Panc1 (cell line): ENCODE measurements at regions of chr4 and their contacts with region 1.

Region 1: GRCh38 chr4:114386637-114387233 is 211.9 kb upstream of the UGT8 start:
- DNase-seq: no peak
- ATAC-seq: no peak
- H3K4me3 ChIP-seq: no peak overlapping the region
- H3K27ac ChIP-seq: no peak overlapping the region
- H3K4me1 ChIP-seq: no peaks in the 10 kb centered on the region
- H3K27me3 ChIP-seq: no peaks in the 10 kb centered on the region
- CTCF ChIP-seq: peak; percentile 60; the same call in 1 of the 2 replicates

Region 2: DNA sequence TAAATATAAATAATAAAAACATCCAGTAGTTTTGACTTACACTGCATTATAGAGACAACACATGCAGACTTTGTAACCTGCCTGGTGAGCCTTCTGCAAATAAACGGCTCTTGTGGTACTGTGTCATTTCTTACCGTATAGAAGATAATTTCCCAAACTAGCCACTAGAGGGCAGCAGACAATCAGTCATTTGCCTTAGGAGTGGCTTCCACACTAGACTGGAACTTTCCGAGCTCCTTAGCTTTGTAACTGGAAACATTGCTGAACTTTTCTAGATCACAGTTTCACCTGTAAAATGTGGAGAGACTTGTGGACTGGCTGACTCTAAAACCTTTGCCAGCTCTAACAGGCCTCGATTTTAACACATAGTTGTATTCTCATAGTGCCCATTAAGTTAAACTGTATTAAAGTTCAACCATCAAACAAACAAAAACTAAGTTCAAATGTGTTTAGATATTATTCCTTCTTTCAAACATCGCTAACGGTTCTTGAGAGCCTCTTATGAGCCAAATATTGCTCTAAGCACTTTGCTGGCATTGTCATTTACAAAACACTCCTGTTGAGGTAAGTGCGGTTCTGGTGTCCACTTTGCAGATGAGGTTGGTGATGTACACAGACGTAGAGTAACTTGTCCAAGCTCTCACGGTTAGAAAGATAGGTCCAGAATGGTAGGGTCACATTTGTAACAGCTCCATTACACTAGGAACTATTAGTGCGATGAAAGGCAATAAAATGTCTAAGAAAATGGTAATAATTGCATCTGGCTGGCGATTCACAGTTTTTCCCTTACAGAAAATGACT is 991.8 kb before region 1 on chr4:
- CTCF ChIA-PET with region 1: interaction called, 3 read pairs
- POLR2A ChIA-PET with region 1: no interaction called
- in situ Hi-C with region 1: no loop called
- intact Hi-C with region 1: loop called (anchors 2 kb)
- DNase-seq: peak; percentile 77
- ATAC-seq: peak; percentile 100
- H3K4me3 ChIP-seq: no peak overlapping the region
- H3K27ac ChIP-seq: peak overlapping the region; percentile 61; the same call in 1 of the 2 replicates
- H3K4me1 ChIP-seq: peaks cover 3% of the 10 kb centered on the region; the same call in 1 of the 2 replicates
- H3K27me3 ChIP-seq: no peaks in the 10 kb centered on the region
- CTCF ChIP-seq: peak; percentile 72

Region 3: GRCh38 chr4:113781439-113782040 is 605.2 kb before region 1 on chr4:
- CTCF ChIA-PET with region 1: no interaction called
- POLR2A ChIA-PET with region 1: no interaction called
- in situ Hi-C with region 1: no loop called
- intact Hi-C with region 1: loop called (anchors 5 kb)
- DNase-seq: no peak
- ATAC-seq: no peak
- H3K4me3 ChIP-seq: no peak overlapping the region
- H3K27ac ChIP-seq: no peak overlapping the region
- H3K4me1 ChIP-seq: no peaks in the 10 kb centered on the region
- H3K27me3 ChIP-seq: no peaks in the 10 kb centered on the region
- CTCF ChIP-seq: peak; percentile 63; the same call in 1 of the 2 replicates

Region 4: DNA sequence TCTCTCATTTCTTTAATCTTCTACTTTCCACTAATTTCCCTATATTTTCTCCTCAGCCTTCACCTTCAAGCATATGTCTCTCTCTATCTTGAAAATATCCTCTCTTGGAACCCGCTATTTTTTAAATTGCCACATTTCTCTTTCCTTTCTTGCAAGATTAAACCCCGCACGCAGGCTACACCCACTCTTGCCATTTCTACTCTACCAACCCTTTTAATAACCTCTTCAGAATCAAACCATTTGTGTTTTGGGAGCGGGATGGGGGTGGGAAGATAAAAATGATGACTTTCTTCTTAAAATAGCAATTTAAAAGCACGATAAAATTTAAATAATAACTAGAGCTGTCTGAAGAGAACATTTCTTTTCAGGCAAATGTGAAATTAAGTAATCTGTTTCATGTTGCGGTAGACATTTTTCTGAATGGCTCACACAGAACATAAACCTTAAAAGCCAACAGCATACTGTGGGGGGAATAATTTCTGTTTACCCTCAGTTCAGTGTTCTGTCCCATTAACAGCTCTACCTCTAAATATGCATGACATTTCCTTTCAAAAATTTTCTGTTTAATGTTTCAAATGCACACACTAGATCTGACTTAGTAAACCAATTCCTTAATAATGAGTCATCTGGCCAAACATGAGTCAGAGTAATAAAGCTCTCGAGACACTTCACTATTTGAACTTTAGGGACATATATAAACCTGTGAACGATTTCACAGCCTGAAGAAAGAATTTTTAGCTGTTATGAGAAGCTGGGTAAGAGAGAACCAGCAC is 427.8 kb before region 1 on chr4:
- CTCF ChIA-PET with region 1: no interaction called
- POLR2A ChIA-PET with region 1: no interaction called
- in situ Hi-C with region 1: no loop called
- intact Hi-C with region 1: loop called (anchors 5 kb)
- DNase-seq: peak; percentile 97
- ATAC-seq: peak; percentile 89
- H3K4me3 ChIP-seq: peak overlapping the region; percentile 22 to 38
- H3K27ac ChIP-seq: peak overlapping the region; percentile 99
- H3K4me1 ChIP-seq: peaks cover 78% of the 10 kb centered on the region
- H3K27me3 ChIP-seq: no peaks in the 10 kb centered on the region
- CTCF ChIP-seq: no peak

Region 5: GRCh38 chr4:114659386-114660008 is 272.8 kb after region 1 on chr4:
- CTCF ChIA-PET with region 1: interaction called, 5 read pairs
- POLR2A ChIA-PET with region 1: no interaction called
- in situ Hi-C with region 1: no loop called
- intact Hi-C with region 1: loop called (anchors 2 kb)
- DNase-seq: peak; percentile 57
- ATAC-seq: peak; percentile 84
- H3K4me3 ChIP-seq: no peak overlapping the region
- H3K27ac ChIP-seq: no peak overlapping the region
- H3K4me1 ChIP-seq: no peaks in the 10 kb centered on the region
- H3K27me3 ChIP-seq: no peaks in the 10 kb centered on the region
- CTCF ChIP-seq: peak; percentile 82

Region 6: DNA sequence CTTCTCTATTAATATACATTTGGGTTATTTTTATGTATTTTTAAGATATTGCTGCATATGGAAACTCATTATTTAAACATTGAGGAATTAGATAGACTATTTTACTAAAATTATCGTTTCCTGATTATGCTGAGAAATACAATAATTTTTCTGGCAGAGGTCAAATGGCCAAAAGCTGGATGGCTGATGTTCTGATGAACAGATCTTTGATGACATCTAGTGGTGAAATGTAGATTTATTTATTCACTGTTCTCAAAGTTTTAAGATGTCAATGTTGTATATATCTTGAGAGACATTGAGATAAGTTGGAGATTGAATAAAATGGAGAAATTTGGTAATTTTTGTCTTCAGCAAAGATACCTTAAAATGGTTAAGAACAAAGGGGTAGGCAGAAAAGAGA is 308.0 kb after region 1 on chr4:
- CTCF ChIA-PET with region 1: interaction called, 10 read pairs
- POLR2A ChIA-PET with region 1: no interaction called
- in situ Hi-C with region 1: no loop called
- intact Hi-C with region 1: loop called (anchors 1 kb)
- DNase-seq: peak; percentile 17
- ATAC-seq: no peak
- H3K4me3 ChIP-seq: no peak overlapping the region
- H3K27ac ChIP-seq: no peak overlapping the region
- H3K4me1 ChIP-seq: no peaks in the 10 kb centered on the region
- H3K27me3 ChIP-seq: no peaks in the 10 kb centered on the region
- CTCF ChIP-seq: peak; percentile 48; the same call in 1 of the 2 replicates